ENCODE measurements at regions of chr3 and their contacts with region 1.

Region 1: DNA sequence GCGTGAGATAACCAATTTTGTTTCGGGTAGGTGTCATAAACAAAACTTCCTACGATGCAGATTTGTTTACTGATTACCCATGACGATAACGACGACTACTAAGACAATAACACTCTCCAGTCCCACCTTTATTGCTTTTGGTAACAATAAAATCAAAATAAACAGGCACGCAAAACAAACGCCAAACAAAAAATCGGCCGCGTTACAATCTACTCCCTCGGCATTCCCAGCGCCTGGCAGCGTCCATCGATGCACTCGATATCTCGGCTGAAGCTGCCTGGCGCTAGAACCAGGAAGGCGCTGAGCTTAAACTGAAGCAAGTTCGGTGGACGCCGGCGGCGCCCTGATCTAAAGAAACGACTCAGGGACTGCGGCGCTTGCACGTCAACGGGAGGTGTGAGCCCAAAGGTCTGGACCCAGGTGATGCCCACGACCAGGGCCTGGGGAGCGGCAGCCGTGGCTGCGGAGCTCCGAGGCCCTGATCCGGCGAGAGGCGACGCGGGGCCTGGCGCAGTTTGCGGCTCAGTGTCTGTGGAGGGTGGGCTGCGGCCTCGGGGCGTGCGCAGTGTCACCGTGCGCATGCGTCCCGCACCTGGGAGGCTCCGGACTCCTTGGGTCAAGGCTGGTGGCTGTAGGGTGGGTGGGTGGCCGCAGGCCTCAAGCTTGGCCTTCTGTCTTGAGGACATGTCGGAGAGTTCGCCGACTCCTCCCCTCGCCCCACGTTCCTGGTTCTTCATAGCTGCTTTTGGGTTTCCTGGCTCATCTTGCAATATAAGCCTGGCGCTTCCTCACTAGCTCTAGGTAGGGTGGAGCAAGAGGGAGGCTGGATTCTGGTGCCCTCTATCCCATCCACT is at the start of gene RSRC1:
- DNase-seq: peak; percentile 87
- ATAC-seq: peak; percentile 88
- H3K4me3 Mint-ChIP-seq: peak within 1 kb of the TSS; percentile 98
- H3K27ac Mint-ChIP-seq: peak within 1 kb of the TSS; percentile 72
- H3K4me1 Mint-ChIP-seq: peaks cover 61% of the 10 kb centered on the region
- H3K27me3 Mint-ChIP-seq: peaks cover 33% of the 10 kb centered on the region
- CTCF ChIP-seq: no peak
- total RNA-seq, gene RSRC1: 37.9 to 44.7 TPM

Region 2: GRCh38 chr3:158091531-158091930 is 18.5 kb before region 1 on chr3:
- CTCF ChIA-PET with region 1: no interaction called
- POLR2A ChIA-PET with region 1: no interaction called
- intact Hi-C with region 1: no loop called
- DNase-seq: no peak
- ATAC-seq: no peak
- H3K4me3 Mint-ChIP-seq: no peak overlapping the region
- H3K27ac Mint-ChIP-seq: no peak overlapping the region
- H3K4me1 Mint-ChIP-seq: peaks cover 2% of the 10 kb centered on the region
- H3K27me3 Mint-ChIP-seq: peaks cover 71% of the 10 kb centered on the region
- CTCF ChIP-seq: no peak

Region 3: GRCh38 chr3:158313338-158313927 is 203.4 kb after region 1 on chr3:
- CTCF ChIA-PET with region 1: no interaction called
- POLR2A ChIA-PET with region 1: no interaction called
- intact Hi-C with region 1: loop called (anchors 10 kb)
- DNase-seq: no peak
- ATAC-seq: no peak
- H3K4me3 Mint-ChIP-seq: no peak overlapping the region
- H3K27ac Mint-ChIP-seq: no peak overlapping the region
- H3K4me1 Mint-ChIP-seq: no peaks in the 10 kb centered on the region
- H3K27me3 Mint-ChIP-seq: no peaks in the 10 kb centered on the region
- CTCF ChIP-seq: peak; percentile 67